ENCODE measurements at regions of chr3 and their contacts with region 1.

Region 1: DNA sequence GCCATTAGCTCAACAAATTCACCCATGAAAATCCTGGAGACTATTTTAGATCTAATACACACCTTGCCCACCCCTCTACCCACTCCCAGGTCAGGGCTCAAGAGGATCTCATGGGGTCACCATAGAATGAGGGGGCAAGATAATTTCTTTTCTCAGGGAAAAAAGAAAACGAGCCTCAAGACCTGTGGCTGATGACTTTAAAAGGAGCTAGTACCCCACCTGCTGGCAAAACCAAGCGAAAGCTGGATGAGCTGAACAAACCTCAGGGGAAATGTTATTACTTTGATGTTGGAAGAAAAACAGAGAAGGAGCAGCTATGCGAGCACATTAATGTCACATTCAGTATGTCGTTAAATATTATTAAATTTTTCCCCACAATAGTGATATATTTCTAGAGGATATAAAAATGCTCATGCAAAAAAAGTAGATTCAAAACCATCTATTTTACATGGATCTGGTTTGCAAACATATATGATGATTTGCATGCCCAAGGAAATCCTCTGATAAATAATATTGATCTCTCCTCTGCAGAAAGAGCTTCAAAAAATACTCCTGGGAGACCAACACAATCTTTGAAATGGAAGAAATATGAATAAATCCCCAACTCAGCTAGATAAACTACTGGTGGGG is 37.7 kb downstream of the PLD1 start:
- DNase-seq: peak; percentile 64
- H3K4me3 ChIP-seq: peak overlapping the region in 1 of 2 experiments; percentile 22; a peak in 1 of 4 replicates
- H3K27ac ChIP-seq: no peak overlapping the region
- H3K4me1 ChIP-seq: peaks cover 0 to 11% of the 10 kb centered on the region in 2 experiments; a peak in 2 of 4 replicates
- H3K27me3 ChIP-seq: no peaks in the 10 kb centered on the region
- CTCF ChIP-seq: peak; percentile 86
- EP300 ChIP-seq: no peak
- RAD21 ChIP-seq: peak; percentile 90

Region 2: GRCh38 chr3:171049861-171050444 is 722.6 kb before region 1 on chr3:
- CTCF ChIA-PET with region 1: interaction called, 11 read pairs
- POLR2A ChIA-PET with region 1: no interaction called
- DNase-seq: peak; percentile 63
- H3K4me3 ChIP-seq: no peak overlapping the region
- H3K27ac ChIP-seq: no peak overlapping the region
- H3K4me1 ChIP-seq: peaks cover 0 to 2% of the 10 kb centered on the region in 2 experiments; a peak in 1 of 4 replicates
- H3K27me3 ChIP-seq: no peaks in the 10 kb centered on the region
- CTCF ChIP-seq: peak; percentile 73
- EP300 ChIP-seq: no peak
- RAD21 ChIP-seq: peak; percentile 88

Region 3: DNA sequence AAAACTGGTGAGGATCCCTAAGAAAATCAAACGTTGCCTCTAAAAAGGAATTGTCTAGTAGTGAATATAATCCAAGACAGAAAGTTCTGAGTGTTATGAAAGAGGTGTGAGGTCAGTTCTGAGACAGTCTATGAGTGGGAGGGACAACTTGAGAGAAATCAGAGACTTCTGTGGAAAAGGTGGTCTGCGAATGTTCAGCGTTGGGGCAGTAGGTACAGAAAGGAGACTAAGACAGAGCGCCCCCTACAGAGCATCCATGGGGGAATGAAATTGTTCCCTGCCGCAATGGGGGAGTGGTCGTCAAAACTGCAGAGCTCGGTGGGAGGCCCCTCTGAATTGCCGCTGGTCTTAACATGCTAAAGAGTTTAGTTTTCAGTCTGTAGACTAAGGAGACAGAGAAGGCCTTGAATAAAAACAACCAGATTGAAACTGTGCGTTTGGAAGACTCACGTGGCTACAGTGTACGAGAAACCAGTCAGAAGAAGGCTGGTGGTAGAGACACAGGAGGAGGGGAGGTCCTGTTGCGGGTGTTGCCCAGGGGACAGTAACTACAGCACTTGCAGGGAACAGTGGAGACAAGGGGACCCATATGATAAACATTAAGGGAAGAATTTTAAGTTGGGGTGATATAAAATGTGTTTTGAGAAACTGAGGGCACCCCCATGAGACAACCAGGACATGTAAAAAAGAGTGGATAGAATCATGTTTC is 319.2 kb before region 1 on chr3:
- CTCF ChIA-PET with region 1: no interaction called
- POLR2A ChIA-PET with region 1: no interaction called
- DNase-seq: no peak
- H3K4me3 ChIP-seq: no peak overlapping the region
- H3K27ac ChIP-seq: no peak overlapping the region
- H3K4me1 ChIP-seq: peaks cover 0 to 2% of the 10 kb centered on the region in 2 experiments; a peak in 2 of 4 replicates
- H3K27me3 ChIP-seq: no peaks in the 10 kb centered on the region
- CTCF ChIP-seq: peak; percentile 49
- EP300 ChIP-seq: no peak
- RAD21 ChIP-seq: no peak

Region 4: GRCh38 chr3:171646357-171647133 is 126.0 kb before region 1 on chr3:
- CTCF ChIA-PET with region 1: interaction called, 64 read pairs
- POLR2A ChIA-PET with region 1: no interaction called
- DNase-seq: peak; percentile 49
- H3K4me3 ChIP-seq: no peak overlapping the region
- H3K27ac ChIP-seq: peak overlapping the region; percentile 0 to 55; a peak in 3 of 4 replicates
- H3K4me1 ChIP-seq: peaks cover 0 to 10% of the 10 kb centered on the region in 2 experiments; a peak in 2 of 4 replicates
- H3K27me3 ChIP-seq: no peaks in the 10 kb centered on the region
- CTCF ChIP-seq: peak; percentile 75
- EP300 ChIP-seq: no peak
- RAD21 ChIP-seq: peak; percentile 81

Region 5: DNA sequence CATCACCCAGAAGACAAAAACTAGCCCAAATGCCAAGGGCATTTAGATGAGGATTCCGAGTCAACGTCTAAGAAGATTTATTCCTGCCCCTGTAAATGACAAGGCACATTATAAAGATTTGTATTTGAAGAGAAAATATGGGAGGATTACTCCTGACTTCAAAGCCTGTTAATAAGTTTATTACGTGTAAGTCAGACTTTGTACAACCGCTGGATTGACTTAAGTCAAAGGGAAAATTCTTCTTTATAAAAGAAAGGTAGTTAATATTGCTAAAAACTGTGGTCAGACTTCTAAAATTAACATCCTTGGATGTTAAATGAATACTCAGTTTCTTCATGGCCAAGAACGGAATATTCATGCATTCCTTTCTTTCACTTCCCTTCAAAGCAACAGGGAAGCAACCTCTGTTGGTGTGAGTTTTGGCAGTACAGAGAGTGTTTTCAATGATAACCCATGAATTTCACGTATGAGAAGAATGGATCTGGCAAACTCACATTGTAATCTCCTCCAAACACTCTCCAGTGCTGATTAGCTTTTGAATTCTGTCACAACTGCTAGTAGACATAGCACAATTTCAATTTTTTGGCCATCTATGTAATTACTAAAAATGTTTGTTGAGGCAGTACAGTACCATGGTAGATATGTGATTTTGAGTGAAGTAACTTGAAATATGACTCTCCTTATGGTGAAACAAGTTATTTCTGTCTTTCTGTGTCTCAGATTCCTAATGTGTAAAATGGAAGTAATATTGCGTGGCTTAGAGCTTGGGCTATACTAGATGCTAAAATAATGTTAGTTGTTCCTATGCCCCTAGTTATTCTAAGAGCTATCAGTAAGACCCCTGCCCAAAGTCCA is 24.3 kb before region 1 on chr3:
- CTCF ChIA-PET with region 1: interaction called, 36 read pairs
- POLR2A ChIA-PET with region 1: no interaction called
- DNase-seq: no peak
- H3K4me3 ChIP-seq: no peak overlapping the region
- H3K27ac ChIP-seq: no peak overlapping the region
- H3K4me1 ChIP-seq: peaks cover 0 to 15% of the 10 kb centered on the region in 2 experiments; a peak in 2 of 4 replicates
- H3K27me3 ChIP-seq: no peaks in the 10 kb centered on the region
- CTCF ChIP-seq: no peak
- EP300 ChIP-seq: no peak
- RAD21 ChIP-seq: no peak

Region 6: DNA sequence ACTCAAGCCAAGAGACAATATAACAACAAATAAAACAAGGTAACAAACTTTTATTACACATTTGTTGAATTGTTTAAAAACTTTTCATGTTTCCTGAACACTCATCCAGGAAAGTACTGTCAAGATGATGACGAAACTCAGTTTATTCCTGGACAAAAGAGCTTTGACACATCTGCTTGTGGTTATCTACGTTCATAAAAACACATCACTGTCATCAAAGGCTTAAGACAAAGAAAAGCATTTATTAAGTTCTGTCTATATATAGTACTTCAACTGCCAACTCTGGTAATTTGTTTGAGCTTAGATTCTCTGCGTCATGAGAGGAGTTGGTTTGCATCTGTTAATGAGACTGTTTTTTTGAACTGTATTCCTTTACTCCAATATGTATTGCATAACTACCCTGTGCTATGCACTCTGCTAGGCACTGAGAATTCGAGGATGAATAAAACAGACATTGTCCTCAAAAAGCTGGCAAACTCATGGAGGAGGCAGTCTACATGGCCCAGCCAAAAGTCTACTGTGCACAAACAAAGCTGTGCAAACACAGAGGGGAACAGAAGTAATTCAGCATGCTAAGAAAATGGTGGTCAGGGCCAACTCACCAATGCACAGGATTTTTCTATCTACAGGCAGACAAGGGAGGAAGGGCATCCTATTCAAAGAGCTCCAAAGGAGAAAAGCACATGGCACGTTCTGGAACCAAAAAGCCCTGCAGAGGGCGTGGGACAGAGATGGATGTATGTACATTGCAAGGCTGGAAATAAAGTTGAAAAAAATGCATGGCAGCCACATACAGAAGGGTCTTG is 16.2 kb after region 1 on chr3:
- CTCF ChIA-PET with region 1: interaction called, 11 read pairs
- POLR2A ChIA-PET with region 1: no interaction called
- DNase-seq: no peak
- H3K4me3 ChIP-seq: no peak overlapping the region
- H3K27ac ChIP-seq: peak overlapping the region in 1 of 2 experiments; percentile 75; a peak in 2 of 4 replicates
- H3K4me1 ChIP-seq: peaks cover 4 to 32% of the 10 kb centered on the region in 2 experiments; a peak in 3 of 4 replicates
- H3K27me3 ChIP-seq: no peaks in the 10 kb centered on the region
- CTCF ChIP-seq: peak; percentile 22; the same call in 1 of the 2 replicates
- EP300 ChIP-seq: peak; percentile 51 to 78; a peak in 2 of 4 replicates
- RAD21 ChIP-seq: no peak

Region 7: DNA sequence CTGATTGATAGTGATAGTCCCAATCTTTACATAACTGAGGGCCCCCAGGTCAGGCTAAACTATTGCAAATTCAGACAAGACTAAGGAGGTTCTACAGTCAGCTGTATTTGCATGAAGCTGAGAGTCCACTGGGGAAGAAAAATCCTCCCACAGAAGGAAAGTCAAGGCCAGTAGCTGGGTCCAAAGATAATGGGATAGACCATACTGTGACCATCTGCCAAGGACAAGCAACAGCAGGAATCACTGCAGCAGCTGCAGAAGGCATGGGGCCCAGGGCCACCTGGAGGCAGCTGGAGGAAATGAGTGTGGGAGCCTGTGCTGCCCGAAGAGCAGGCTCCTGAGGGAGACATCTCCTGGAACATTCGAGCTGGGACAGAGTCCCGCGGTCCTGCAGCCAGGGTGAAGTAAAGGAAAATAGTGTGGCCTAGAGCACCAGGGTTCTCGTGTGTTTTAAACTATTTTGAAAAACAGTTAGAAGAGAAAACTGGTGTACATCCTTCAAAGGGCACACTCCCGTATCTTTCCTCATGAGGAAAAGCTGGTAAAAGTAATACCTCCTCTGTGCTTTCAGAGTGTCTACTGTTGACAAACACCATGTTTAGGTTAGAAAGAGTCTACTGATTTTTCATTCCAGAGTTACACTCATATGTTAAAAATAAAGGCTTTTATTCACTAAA is 57.4 kb after region 1 on chr3:
- CTCF ChIA-PET with region 1: interaction called, 11 read pairs
- POLR2A ChIA-PET with region 1: no interaction called
- DNase-seq: peak; percentile 59
- H3K4me3 ChIP-seq: no peak overlapping the region
- H3K27ac ChIP-seq: peak overlapping the region in 1 of 2 experiments; percentile 27; a peak in 1 of 4 replicates
- H3K4me1 ChIP-seq: peaks cover 5 to 8% of the 10 kb centered on the region in 2 experiments; a peak in 3 of 4 replicates
- H3K27me3 ChIP-seq: no peaks in the 10 kb centered on the region
- CTCF ChIP-seq: peak; percentile 67
- EP300 ChIP-seq: no peak
- RAD21 ChIP-seq: peak; percentile 64